Panc1 (cell line): ENCODE measurements at regions of chr11 and their contacts with region 1.

Region 1: GRCh38 chr11:72683782-72684200 is 9.6 kb upstream of the PDE2A start:
- DNase-seq: peak; percentile 52
- ATAC-seq: peak; percentile 73
- H3K4me3 ChIP-seq: no peak overlapping the region
- H3K27ac ChIP-seq: no peak overlapping the region
- H3K4me1 ChIP-seq: peaks cover 18% of the 10 kb centered on the region
- H3K27me3 ChIP-seq: peaks cover 6% of the 10 kb centered on the region
- CTCF ChIP-seq: peak; percentile 98

Region 2: DNA sequence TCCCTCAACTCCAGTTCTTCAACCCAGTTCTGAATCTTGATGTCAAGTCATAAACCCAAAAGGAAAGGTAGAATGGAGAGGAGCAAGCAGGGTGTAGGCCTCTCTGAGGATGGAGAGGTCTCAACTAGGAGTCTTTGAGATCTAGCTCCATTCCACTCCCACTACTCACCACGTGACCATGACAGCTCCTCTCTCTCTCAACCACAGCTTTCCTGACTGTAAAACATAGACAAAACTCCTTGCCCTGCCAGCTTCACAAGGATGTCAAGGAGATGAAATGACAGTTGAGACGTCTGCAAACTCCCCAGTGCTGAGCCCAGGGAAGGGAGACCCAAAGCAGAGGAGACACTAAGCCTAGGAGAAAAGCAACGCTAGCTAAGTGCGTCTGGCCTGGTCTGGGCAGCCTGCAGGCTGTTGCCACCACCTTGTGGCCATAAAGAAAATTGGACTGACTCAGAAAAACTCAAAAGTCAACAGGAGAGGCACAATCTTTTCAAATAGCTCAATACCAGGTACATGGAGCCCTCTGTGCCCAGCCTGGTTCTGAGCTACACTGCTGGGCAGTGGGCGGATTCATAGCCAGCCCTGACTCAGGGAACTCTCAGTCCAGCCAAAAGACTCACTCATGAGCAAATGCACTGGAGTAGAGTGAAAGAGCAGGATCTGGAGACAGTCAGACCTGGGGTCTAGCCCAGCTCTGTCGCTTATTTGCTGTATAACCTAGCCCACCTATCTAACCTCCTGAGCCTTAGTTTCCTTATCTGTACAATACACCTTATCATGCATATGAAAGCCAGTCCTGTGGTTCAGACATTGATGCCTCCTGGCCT is 252.8 kb before region 1 on chr11:
- CTCF ChIA-PET with region 1: interaction called, 12 read pairs
- POLR2A ChIA-PET with region 1: no interaction called
- in situ Hi-C with region 1: no loop called
- intact Hi-C with region 1: no loop called
- DNase-seq: no peak
- ATAC-seq: 0 out of 2 replicates have a peak, but pooled peaks have one; percentile 36
- H3K4me3 ChIP-seq: no peak overlapping the region
- H3K27ac ChIP-seq: no peak overlapping the region
- H3K4me1 ChIP-seq: peaks cover 5% of the 10 kb centered on the region
- H3K27me3 ChIP-seq: no peaks in the 10 kb centered on the region
- CTCF ChIP-seq: peak; percentile 93